PC-9 (cell line): ENCODE measurements at regions of chr6 and their contacts with region 1.

Region 1: DNA sequence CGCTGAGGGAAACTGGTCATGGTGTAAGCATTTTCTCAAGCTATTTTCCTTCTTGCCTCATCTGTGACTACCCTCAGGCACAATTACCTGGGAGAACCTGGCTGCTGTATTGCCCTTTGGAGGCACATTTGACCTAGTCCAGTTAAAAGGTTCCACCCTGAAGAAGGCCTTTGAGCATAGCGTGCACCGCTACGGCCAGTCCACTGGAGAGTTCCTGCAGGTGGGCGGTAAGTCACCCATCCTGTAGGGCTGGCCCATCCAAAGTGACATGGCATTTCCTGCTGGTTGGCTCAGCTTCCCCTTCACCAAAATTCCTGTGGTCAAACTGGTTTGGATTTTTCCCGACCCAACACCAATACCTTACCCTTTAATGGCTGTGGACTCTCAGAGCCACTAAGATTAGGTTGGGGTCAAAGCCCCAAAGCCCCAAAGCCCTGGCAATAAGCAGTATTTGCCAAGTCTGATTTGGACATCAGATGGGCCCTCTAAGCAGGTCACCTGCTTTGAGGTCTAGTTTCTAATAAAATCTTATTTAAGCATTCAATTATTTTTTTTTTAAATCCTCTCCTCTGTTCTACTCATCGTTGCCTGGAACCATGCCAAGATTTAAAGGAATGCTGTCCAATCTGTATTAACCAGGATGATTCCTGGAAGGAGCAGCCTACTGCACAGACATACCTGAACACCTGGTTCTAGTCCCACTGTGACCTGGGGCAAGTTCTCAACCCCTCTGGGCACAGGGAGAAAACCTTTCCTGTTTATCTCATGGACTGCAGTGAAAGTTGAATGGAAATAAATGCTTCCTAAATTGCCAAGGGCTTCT is 40.8 kb downstream of the NT5E start:
- DNase-seq: peak; percentile 94 to 99
- H3K4me3 ChIP-seq: no peak overlapping the region
- H3K27ac ChIP-seq: peak overlapping the region; percentile 96
- H3K4me1 ChIP-seq: peaks cover 62% of the 10 kb centered on the region
- H3K27me3 ChIP-seq: no peaks in the 10 kb centered on the region
- CTCF ChIP-seq: no peak

Region 2: GRCh38 chr6:85360794-85361642 is 129.6 kb before region 1 on chr6:
- CTCF ChIA-PET with region 1: no interaction called
- POLR2A ChIA-PET with region 1: no interaction called
- intact Hi-C with region 1: loop called (anchors 1 kb)
- DNase-seq: peak; percentile 75 to 96
- H3K4me3 ChIP-seq: no peak overlapping the region
- H3K27ac ChIP-seq: peak overlapping the region; percentile 87
- H3K4me1 ChIP-seq: peaks cover 61% of the 10 kb centered on the region
- H3K27me3 ChIP-seq: no peaks in the 10 kb centered on the region
- CTCF ChIP-seq: no peak

Region 3: GRCh38 chr6:85449818-85450759 is 40.6 kb before region 1 on chr6 and contains the start of gene NT5E:
- CTCF ChIA-PET with region 1: no interaction called
- POLR2A ChIA-PET with region 1: interaction called, 12 read pairs
- intact Hi-C with region 1: loop called (anchors 2 kb)
- DNase-seq: peak; percentile 71 to 88
- H3K4me3 ChIP-seq: peak within 1 kb of the TSS; percentile 94
- H3K27ac ChIP-seq: peak within 1 kb of the TSS; percentile 74
- H3K4me1 ChIP-seq: peaks cover 52% of the 10 kb centered on the region
- H3K27me3 ChIP-seq: no peaks in the 10 kb centered on the region
- CTCF ChIP-seq: no peak
- total RNA-seq, gene NT5E: 84.6 and 90.4 TPM in 2 replicates

Region 4: DNA sequence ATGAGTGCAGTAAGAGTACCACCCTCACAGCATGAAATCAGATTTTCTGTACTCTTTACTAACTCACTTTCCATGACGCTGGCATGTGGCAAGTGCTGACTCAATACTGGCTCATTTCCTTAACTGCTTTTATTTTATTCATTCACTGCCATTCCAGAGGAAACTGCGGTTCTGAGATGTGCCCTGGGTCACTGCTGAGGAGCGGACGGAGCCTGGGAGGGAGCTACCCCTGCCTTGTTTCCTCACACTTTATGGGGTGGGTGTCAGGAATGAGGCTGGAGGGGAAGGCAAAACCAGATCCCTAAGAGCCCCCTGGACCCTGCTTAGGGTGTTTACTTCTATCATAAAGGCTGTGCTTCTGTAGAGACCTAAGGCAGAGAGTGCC is 26.4 kb before region 1 on chr6:
- CTCF ChIA-PET with region 1: interaction called, 3 read pairs
- POLR2A ChIA-PET with region 1: interaction called, 22 read pairs
- intact Hi-C with region 1: loop called (anchors 1 kb)
- DNase-seq: peak; percentile 61 to 85
- H3K4me3 ChIP-seq: peak overlapping the region; percentile 19; the same call in 1 of the 2 replicates
- H3K27ac ChIP-seq: peak overlapping the region; percentile 98
- H3K4me1 ChIP-seq: peaks cover 100% of the 10 kb centered on the region
- H3K27me3 ChIP-seq: no peaks in the 10 kb centered on the region
- CTCF ChIP-seq: no peak

Region 5: GRCh38 chr6:85593438-85594196 is 103.0 kb after region 1 on chr6 and contains the start of gene SNX14:
- CTCF ChIA-PET with region 1: no interaction called
- POLR2A ChIA-PET with region 1: interaction called, 8 read pairs
- intact Hi-C with region 1: loop called (anchors 1 kb)
- DNase-seq: peak; percentile 85 to 92
- H3K4me3 ChIP-seq: peak within 1 kb of the TSS; percentile 84
- H3K27ac ChIP-seq: peak within 1 kb of the TSS; percentile 76
- H3K4me1 ChIP-seq: peaks cover 34% of the 10 kb centered on the region
- H3K27me3 ChIP-seq: no peaks in the 10 kb centered on the region
- CTCF ChIP-seq: no peak
- total RNA-seq, gene SNX14: 92.0 and 99.1 TPM in 2 replicates

Region 6: GRCh38 chr6:86276056-86276455 is 785.4 kb after region 1 on chr6:
- CTCF ChIA-PET with region 1: no interaction called
- POLR2A ChIA-PET with region 1: no interaction called
- intact Hi-C with region 1: no loop called
- DNase-seq: no peak
- H3K4me3 ChIP-seq: no peak overlapping the region
- H3K27ac ChIP-seq: no peak overlapping the region
- H3K4me1 ChIP-seq: no peaks in the 10 kb centered on the region
- H3K27me3 ChIP-seq: no peaks in the 10 kb centered on the region
- CTCF ChIP-seq: no peak